SK-N-SH (cell line): ENCODE measurements at regions of chr17 and their contacts with region 1.

Region 1: GRCh38 chr17:49508061-49508865 is 13.2 kb downstream of the NGFR start:
- DNase-seq: peak; percentile 59
- H3K4me3 ChIP-seq: no peak overlapping the region
- H3K27ac ChIP-seq: peak overlapping the region in 1 of 2 experiments; percentile 82; a peak in 1 of 4 replicates
- H3K4me1 ChIP-seq: peaks cover 4 to 57% of the 10 kb centered on the region in 2 experiments; a peak in 1 of 4 replicates
- H3K27me3 ChIP-seq: peaks cover 25% of the 10 kb centered on the region
- CTCF ChIP-seq: no peak
- EP300 ChIP-seq: no peak
- RAD21 ChIP-seq: no peak

Region 2: DNA sequence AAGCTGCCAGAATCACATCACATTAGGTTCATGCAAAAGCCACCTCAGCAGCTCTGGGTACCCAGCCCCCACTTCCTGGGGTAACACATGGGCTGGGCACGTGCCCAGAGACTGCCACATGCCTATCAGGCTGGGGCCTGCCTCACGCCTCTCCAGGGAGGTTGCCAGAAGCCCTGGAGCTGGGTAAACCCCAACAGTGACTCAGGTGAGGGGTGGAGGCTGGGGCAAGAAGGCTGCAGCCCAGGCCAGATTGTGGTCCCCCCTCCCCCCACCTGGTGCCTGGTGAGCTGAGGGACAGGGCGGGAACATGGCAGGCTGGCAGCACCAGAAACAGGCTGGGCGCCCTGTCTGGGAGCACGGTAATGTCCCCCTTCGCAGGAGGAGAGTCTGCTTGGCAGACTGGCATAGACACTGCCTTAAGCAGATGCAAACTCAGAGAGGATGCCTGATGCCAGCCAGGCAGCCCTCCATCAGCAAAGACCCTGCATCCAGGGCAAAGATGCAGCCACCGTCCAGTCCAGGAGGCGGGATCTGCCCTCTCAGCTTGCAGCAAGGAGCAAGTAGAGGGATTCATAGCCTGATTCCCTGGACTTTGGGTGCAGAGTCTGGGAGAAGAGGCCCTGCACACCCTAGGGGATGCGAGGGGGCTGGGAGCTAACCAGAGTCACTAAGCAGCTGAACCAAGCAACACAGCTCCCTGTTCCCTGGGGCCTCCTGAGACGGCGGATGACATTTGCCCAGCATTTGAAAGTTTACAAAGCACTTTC is 15.6 kb after region 1 on chr17:
- CTCF ChIA-PET with region 1: interaction called, 20 read pairs
- POLR2A ChIA-PET with region 1: interaction called, 3 read pairs
- DNase-seq: peak; percentile 56
- H3K4me3 ChIP-seq: no peak overlapping the region
- H3K27ac ChIP-seq: peak overlapping the region in 1 of 2 experiments; percentile 66; a peak in 1 of 4 replicates
- H3K4me1 ChIP-seq: peaks cover 0 to 63% of the 10 kb centered on the region in 2 experiments; a peak in 1 of 4 replicates
- H3K27me3 ChIP-seq: peaks cover 8% of the 10 kb centered on the region; the same call in 1 of the 2 replicates
- CTCF ChIP-seq: no peak
- EP300 ChIP-seq: no peak
- RAD21 ChIP-seq: no peak

Region 3: GRCh38 chr17:49548506-49549310 is 40.4 kb after region 1 on chr17:
- CTCF ChIA-PET with region 1: interaction called, 149 read pairs
- POLR2A ChIA-PET with region 1: interaction called, 3 read pairs
- DNase-seq: peak; percentile 73
- H3K4me3 ChIP-seq: no peak overlapping the region; a peak in 1 of 4 replicates
- H3K27ac ChIP-seq: peak overlapping the region in 1 of 2 experiments; percentile 30; a peak in 1 of 4 replicates
- H3K4me1 ChIP-seq: peaks cover 0 to 43% of the 10 kb centered on the region in 2 experiments; a peak in 1 of 4 replicates
- H3K27me3 ChIP-seq: peaks cover 8% of the 10 kb centered on the region
- CTCF ChIP-seq: peak; percentile 68
- EP300 ChIP-seq: no peak
- RAD21 ChIP-seq: peak; percentile 81